ENCODE measurements at regions of chr3 and their contacts with region 1.

Region 1: GRCh38 chr3:188294823-188295487 is 141.0 kb downstream of the LPP start:
- DNase-seq: peak in 1 of 2 donors; percentile 29
- ATAC-seq: peak; percentile 73 to 90 (median 88)
- H3K4me3 ChIP-seq: no peak overlapping the region
- H3K27ac ChIP-seq: peak overlapping the region; percentile 34 to 87 (median 79)
- H3K4me1 ChIP-seq: peaks cover 3 to 85% (median 70%) of the 10 kb centered on the region in 9 donors
- H3K27me3 ChIP-seq: no peaks in the 10 kb centered on the region
- CTCF ChIP-seq: no peak

Region 2: GRCh38 chr3:188000361-188000861 is 294.5 kb before region 1 on chr3:
- intact Hi-C with region 1: no loop called
- DNase-seq: no peak
- ATAC-seq: no peak
- H3K4me3 ChIP-seq: no peak overlapping the region
- H3K27ac ChIP-seq: peak overlapping the region in 1 of 10 donors; percentile 72
- H3K4me1 ChIP-seq: peaks cover 0 to 27% (median 0%) of the 10 kb centered on the region in 9 donors
- H3K27me3 ChIP-seq: no peaks in the 10 kb centered on the region
- CTCF ChIP-seq: no peak

Region 3: GRCh38 chr3:188397766-188398705 is 103.1 kb after region 1 on chr3:
- intact Hi-C with region 1: loop called in 1 of 10 experiments (anchors 5 kb)
- DNase-seq: peak; percentile 22 to 28
- ATAC-seq: peak in 6 of 8 donors; percentile 45 to 88 (median 67)
- H3K4me3 ChIP-seq: peak overlapping the region in 6 of 10 donors; percentile 10 to 27 (median 21)
- H3K27ac ChIP-seq: peak overlapping the region; percentile 28 to 81 (median 76)
- H3K4me1 ChIP-seq: peaks cover 2 to 68% (median 36%) of the 10 kb centered on the region in 9 donors
- H3K27me3 ChIP-seq: no peaks in the 10 kb centered on the region
- CTCF ChIP-seq: no peak

Region 4: GRCh38 chr3:189214651-189215050 is 919.7 kb after region 1 on chr3:
- intact Hi-C with region 1: loop called in 1 of 10 experiments (anchors 5 kb)
- DNase-seq: no peak
- ATAC-seq: no peak
- H3K4me3 ChIP-seq: no peak overlapping the region
- H3K27ac ChIP-seq: no peak overlapping the region
- H3K4me1 ChIP-seq: no peaks in the 10 kb centered on the region
- H3K27me3 ChIP-seq: no peaks in the 10 kb centered on the region
- CTCF ChIP-seq: no peak

Measured in heart right ventricle (tissue), 16 donors.